ENCODE measurements at regions of chr19 and their contacts with region 1.

Region 1: DNA sequence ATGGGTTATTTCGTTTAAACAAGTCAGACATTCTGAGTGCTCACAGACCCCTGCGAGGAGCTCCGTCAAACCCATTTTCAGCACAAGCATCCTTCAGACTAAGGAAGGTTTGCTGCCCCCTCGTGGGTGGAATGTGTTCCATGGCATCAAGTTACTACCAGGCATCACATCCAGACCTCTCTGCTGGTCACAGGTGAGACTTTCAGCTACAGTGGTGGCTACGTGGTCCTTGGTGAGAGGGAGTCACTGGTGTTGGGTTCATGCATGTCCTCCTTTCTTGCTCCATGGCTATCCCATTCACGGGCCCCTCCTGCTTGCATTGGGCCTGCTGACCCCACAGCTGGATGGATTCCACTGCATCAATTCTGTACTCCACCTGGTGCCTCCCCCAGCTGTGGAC is 9.1 kb upstream of the LILRB5 start:
- H3K4me3 ChIP-seq: no peak overlapping the region
- H3K27ac ChIP-seq: no peak overlapping the region
- H3K4me1 ChIP-seq: no peaks in the 10 kb centered on the region
- CTCF ChIP-seq: peak; percentile 52

Region 2: DNA sequence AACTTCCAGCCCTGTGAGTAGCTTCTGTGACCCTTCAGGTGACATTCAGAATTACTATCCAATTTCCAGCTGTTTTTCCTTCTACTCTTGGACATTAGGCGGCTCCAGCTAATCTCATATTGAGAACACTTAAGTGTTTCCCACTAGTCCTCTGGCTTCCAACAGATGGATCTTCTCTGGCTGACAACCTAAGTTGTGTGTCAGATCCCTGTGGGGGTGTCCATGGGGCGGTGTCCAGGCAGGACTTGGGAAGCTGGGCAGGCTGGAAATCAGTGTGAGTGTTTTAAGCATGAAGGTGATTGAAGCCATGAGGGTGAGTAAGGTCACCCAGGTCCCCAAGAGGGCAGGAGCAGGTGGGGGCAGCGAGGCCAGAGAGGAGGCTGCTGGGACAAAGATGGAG is 118.5 kb before region 1 on chr19:
- CTCF ChIA-PET with region 1: no interaction called
- POLR2A ChIA-PET with region 1: no interaction called
- H3K4me3 ChIP-seq: no peak overlapping the region
- H3K27ac ChIP-seq: no peak overlapping the region
- H3K4me1 ChIP-seq: no peaks in the 10 kb centered on the region
- CTCF ChIP-seq: no peak

Region 3: GRCh38 chr19:54231077-54231931 is 34.8 kb before region 1 on chr19:
- CTCF ChIA-PET with region 1: interaction called, 14 read pairs
- POLR2A ChIA-PET with region 1: interaction called, 3 read pairs
- H3K4me3 ChIP-seq: no peak overlapping the region
- H3K27ac ChIP-seq: no peak overlapping the region
- H3K4me1 ChIP-seq: peaks cover 2% of the 10 kb centered on the region; the same call in 1 of the 2 replicates
- CTCF ChIP-seq: peak; percentile 95

Region 4: DNA sequence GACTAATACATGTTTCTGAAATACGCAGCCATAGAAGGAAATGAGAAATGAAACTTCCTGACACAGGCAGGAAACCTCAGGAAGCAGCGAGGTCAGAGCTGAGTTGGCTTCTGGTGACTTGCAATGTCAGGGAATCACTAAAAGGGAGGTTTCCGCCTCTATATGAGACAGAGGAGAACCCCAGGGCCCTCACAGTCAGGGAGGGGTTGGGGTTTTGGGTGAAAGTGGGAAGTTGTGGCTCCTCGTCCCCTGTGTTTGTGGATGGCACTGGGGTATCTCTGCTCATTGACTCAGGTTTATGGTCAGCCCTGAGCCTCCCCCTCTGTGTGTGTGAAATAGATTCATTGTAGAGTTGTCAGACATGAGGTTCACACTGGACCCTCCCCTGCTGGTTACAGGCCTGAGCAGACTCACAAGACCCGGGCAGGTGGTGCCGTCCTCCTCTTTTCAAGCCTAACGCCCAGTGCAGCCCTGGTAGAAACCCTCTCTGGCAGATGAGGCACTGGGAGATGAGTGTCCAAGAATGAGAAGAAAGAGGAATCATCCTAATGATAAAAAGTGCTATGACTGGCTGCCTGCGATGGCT is 18.0 kb before region 1 on chr19:
- CTCF ChIA-PET with region 1: interaction called, 23 read pairs
- POLR2A ChIA-PET with region 1: no interaction called
- H3K4me3 ChIP-seq: no peak overlapping the region
- H3K27ac ChIP-seq: no peak overlapping the region
- H3K4me1 ChIP-seq: no peaks in the 10 kb centered on the region
- CTCF ChIP-seq: no peak

Region 5: DNA sequence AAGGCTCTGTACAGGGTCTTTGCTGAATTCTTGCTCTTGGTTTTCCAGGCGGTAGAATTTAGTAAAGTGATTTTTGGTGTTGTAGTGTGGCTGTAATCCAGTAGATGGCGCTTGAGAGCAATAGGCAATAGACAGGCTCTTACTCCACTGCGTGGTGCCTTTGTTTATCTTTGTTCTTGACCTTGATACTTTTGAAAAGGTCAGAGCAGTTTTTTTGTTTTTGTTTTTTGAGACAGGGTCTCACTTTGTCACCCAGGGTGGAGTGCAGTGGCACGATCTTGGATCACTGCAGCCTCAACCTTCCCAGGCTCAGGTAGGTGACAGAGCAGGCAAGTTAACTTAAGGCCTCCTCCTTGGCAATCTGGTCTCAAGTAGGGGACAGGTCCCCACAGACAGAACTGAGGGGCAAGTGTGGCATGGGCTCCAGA is 59.1 kb after region 1 on chr19:
- CTCF ChIA-PET with region 1: interaction called, 18 read pairs
- POLR2A ChIA-PET with region 1: no interaction called
- H3K4me3 ChIP-seq: no peak overlapping the region
- H3K27ac ChIP-seq: no peak overlapping the region
- H3K4me1 ChIP-seq: no peaks in the 10 kb centered on the region
- CTCF ChIP-seq: peak; percentile 68

Region 6: GRCh38 chr19:54644056-54644455 is 377.9 kb after region 1 on chr19:
- CTCF ChIA-PET with region 1: no interaction called
- POLR2A ChIA-PET with region 1: no interaction called
- H3K4me3 ChIP-seq: no peak overlapping the region
- H3K27ac ChIP-seq: no peak overlapping the region
- H3K4me1 ChIP-seq: no peaks in the 10 kb centered on the region
- CTCF ChIP-seq: no peak